Sciatic nerve (tissue), 2 donors: ENCODE measurements at regions of chr19 and their contacts with region 1.

Region 1: GRCh38 chr19:13794757-13795589 is at the start of gene ZSWIM4:
- DNase-seq: peak; percentile 99
- ATAC-seq: peak; percentile 98
- total RNA-seq, gene ZSWIM4: 8.2 TPM

Region 2: GRCh38 chr19:13718733-13719132 is 76.2 kb before region 1 on chr19:
- intact Hi-C with region 1: no loop called
- DNase-seq: no peak
- ATAC-seq: no peak

Region 3: GRCh38 chr19:13847407-13848339 is 52.7 kb after region 1 on chr19:
- intact Hi-C with region 1: loop called (anchors 2 kb)
- DNase-seq: peak; percentile 97
- ATAC-seq: peak; percentile 79